Activated CD4-positive, alpha-beta T cell treated with anti-CD3 and anti-CD28 coated beads for 36 hours (primary cell): ENCODE measurements at regions of chr3 and their contacts with region 1.

Region 1: DNA sequence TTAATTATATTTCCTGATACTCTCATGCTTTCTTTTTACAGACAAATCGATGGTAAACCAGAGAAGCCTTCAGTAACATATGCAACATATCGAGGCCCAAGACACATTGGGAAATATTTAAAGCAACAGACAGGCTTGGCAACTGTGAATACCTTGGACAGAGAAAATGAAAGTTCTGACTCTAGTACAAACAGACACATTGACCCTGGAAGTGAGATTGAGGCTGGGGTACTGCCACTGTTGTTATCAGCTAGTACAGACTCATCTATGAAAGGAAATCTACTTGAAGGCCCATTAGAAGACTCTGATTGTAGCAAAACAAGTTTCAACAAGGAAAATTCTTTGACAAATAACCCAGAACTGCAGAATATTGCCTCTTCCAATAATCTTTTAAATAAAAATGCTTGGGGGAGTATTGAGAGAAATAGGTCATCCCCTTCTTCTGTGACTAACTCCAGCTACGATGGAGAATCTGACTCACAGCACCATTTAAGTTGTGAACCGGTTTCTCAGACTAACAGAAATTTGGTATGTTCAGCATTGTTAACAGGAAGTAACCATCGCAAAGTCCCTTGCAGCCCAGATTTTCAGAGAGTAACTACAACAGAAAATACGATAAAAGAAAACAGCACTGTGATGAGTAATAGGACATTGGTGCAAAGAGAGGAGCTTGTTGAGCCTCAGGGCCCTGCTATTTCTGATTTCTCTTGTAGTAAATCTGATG is 50.2 kb downstream of the CRYBG3 start:
- DNase-seq: peak; percentile 57
- ATAC-seq: peak; percentile 93
- H3K4me3 Mint-ChIP-seq: peak overlapping the region; percentile 28
- H3K27ac Mint-ChIP-seq: peak overlapping the region; percentile 86
- H3K4me1 Mint-ChIP-seq: peaks cover 22% of the 10 kb centered on the region
- H3K27me3 Mint-ChIP-seq: no peaks in the 10 kb centered on the region

Region 2: DNA sequence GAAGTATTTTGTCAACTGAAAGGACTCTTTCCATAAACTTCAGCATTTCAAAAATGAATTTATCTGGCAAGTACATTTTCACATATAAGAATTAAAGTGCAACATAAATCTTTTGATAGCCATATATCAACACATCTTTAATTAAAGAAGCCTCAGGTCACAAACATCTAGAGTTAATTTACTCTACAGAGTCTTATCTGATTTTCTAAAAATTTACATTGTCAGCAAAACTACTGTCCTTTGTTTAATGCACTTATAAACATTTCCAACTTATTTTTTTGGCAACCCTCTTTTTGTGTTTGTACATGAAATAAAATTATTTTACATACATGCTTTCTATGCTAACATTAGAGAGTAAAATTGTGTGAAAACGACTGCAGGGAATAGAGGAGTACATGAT is 524.2 kb before region 1 on chr3:
- CTCF ChIA-PET with region 1: no interaction called
- POLR2A ChIA-PET with region 1: interaction called, 10 read pairs
- intact Hi-C with region 1: no loop called
- DNase-seq: no peak
- ATAC-seq: no peak
- H3K4me3 Mint-ChIP-seq: no peak overlapping the region
- H3K27ac Mint-ChIP-seq: no peak overlapping the region
- H3K4me1 Mint-ChIP-seq: no peaks in the 10 kb centered on the region
- H3K27me3 Mint-ChIP-seq: no peaks in the 10 kb centered on the region

Region 3: DNA sequence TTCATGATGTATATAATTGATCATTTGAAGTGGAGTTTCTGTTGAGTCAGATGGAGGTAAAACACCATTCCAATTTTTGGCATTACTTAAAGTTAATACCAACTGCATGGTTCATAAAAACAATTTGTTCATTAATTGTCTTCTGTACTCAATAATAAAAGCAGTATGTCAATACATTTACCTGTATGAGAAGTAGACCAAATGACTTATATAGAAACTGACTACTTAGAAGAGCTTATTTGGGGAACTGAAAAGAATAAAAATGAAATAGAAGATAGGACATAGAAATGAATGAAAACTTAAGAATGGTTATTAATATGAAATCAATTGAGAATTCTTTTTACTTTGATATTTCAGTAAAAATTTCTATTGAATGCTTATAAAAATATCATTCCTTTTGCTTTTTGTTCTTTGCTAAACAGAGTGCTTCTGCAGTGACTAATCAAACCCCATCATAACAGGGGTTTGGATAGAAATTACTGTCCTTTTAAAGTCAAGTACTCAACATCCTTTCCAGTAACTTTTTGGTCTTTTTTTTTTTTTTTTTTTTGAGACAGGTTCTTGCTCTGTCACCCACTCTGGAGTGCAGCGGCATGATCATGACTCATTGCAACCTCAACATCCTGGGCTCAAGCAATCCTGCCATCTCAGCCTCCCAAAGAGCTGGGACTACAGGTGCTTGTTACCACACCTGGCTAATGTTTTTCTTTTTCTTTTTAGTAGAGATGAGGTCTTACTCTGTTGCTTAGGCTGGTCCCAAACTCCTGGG is 56.6 kb before region 1 on chr3:
- CTCF ChIA-PET with region 1: no interaction called
- POLR2A ChIA-PET with region 1: no interaction called
- intact Hi-C with region 1: loop called (anchors 1 to 2 kb)
- DNase-seq: peak; percentile 72
- ATAC-seq: peak; percentile 99
- H3K4me3 Mint-ChIP-seq: no peak overlapping the region
- H3K27ac Mint-ChIP-seq: peak overlapping the region; percentile 51
- H3K4me1 Mint-ChIP-seq: peaks cover 13% of the 10 kb centered on the region
- H3K27me3 Mint-ChIP-seq: peaks cover 10% of the 10 kb centered on the region

Region 4: DNA sequence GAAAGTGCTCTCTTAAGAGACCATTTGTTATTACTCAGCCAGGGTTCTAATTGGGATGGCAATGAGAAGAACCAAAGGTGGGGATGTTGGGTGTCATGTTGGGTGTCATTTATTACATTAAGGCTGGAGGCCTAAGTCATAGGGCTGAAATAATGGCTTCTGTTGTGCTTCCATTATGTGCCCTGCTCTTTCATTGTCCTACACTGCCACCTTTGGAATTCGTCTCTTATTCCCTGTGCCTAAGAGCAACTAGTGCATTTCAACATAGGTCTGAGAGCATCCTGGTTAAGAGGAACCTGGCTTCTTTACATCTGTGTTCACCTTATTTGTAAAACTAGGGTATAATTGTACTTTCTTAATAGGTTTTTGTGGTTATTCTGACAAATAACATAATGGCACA is 68.1 kb after region 1 on chr3:
- CTCF ChIA-PET with region 1: no interaction called
- POLR2A ChIA-PET with region 1: no interaction called
- intact Hi-C with region 1: no loop called
- DNase-seq: no peak
- ATAC-seq: no peak
- H3K4me3 Mint-ChIP-seq: no peak overlapping the region
- H3K27ac Mint-ChIP-seq: no peak overlapping the region
- H3K4me1 Mint-ChIP-seq: peaks cover 19% of the 10 kb centered on the region
- H3K27me3 Mint-ChIP-seq: no peaks in the 10 kb centered on the region